Activated CD4-positive, alpha-beta T cell treated with anti-CD3 and anti-CD28 coated beads, Interleukin-2, amount 10 ng/mL, durations not matched to agents 24 days and 14 days (primary cell): ENCODE measurements at regions of chr22 and their contacts with region 1.

Region 1: GRCh38 chr22:23786752-23787599 is at the start of gene SMARCB1:
- DNase-seq: peak; percentile 96
- H3K4me3 Mint-ChIP-seq: peak within 1 kb of the TSS; percentile 88
- H3K27ac Mint-ChIP-seq: peak within 1 kb of the TSS; percentile 95
- H3K4me1 Mint-ChIP-seq: peaks cover 28% of the 10 kb centered on the region
- H3K27me3 Mint-ChIP-seq: no peaks in the 10 kb centered on the region
- total RNA-seq, gene SMARCB1: 89.9 and 92.2 TPM in 2 replicates

Region 2: DNA sequence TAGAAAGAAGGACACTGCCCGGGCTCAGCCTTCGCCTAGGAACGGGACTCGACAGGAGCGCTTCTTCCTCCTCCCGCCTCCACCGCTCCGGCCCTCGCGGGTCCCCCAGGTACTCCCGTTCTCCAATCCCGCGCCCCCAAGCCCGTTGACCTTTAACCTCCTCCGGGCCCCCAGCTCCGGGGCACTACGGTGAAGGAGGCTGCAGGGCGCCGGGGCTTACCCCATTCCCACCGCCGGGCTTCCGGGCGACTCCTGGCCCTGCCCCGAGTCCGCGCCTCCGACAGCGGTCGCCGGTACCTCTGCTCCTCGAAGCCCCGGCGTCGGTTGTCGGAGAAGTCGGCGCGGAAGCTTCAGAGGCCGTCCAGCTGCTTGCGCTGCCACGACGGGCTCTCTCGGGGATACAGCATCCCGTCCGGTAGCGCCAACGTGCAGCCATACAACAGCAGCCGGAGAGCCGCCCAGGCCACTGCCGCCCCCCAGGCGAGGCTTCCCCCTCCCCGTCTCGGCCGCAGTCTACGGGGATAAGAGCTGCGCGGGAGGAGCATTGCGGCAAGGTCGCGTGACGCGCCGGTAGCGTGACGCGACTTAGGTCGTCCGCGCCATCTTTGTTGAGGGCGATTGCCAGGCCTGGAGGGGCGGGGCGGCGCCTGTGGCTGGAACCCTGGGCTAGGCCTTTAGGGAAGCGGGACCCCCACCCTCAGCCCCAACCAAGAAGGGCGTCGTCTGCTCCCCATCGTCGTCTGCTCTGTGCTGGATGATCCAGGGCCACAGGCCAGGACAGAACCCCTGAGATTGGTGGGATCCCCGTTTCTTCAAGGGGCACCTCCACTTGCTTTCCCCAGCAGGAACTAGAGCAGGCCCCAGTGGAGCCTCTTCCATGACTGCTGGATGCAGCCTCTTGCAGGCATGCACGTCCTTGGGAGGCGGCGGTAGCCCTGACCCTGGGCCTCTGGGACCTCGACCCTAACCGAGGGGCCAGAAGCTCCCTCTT is 69.9 kb before region 1 on chr22:
- intact Hi-C with region 1: loop called (anchors 2 kb)
- DNase-seq: peak; percentile 96
- H3K4me3 Mint-ChIP-seq: peak overlapping the region; percentile 80
- H3K27ac Mint-ChIP-seq: peak overlapping the region; percentile 87
- H3K4me1 Mint-ChIP-seq: peaks cover 14% of the 10 kb centered on the region
- H3K27me3 Mint-ChIP-seq: no peaks in the 10 kb centered on the region

Region 3: GRCh38 chr22:23767673-23768548 is 19.1 kb before region 1 on chr22 and contains the start of gene CHCHD10:
- intact Hi-C with region 1: loop called (anchors 1 kb)
- DNase-seq: peak; percentile 95
- H3K4me3 Mint-ChIP-seq: peak within 1 kb of the TSS; percentile 87
- H3K27ac Mint-ChIP-seq: peak within 1 kb of the TSS; percentile 79
- H3K4me1 Mint-ChIP-seq: peaks cover 34% of the 10 kb centered on the region
- H3K27me3 Mint-ChIP-seq: peaks cover 2% of the 10 kb centered on the region
- total RNA-seq, gene CHCHD10: 122 and 126 TPM in 2 replicates

Region 4: GRCh38 chr22:23838681-23839468 is 51.9 kb after region 1 on chr22 and contains the start of gene DERL3:
- intact Hi-C with region 1: loop called (anchors 1 kb)
- DNase-seq: peak; percentile 99
- H3K4me3 Mint-ChIP-seq: peak within 1 kb of the TSS; percentile 97
- H3K27ac Mint-ChIP-seq: peak within 1 kb of the TSS; percentile 96
- H3K4me1 Mint-ChIP-seq: peaks cover 25% of the 10 kb centered on the region
- H3K27me3 Mint-ChIP-seq: peaks cover 11% of the 10 kb centered on the region
- total RNA-seq, gene DERL3: 13.4 and 14.8 TPM in 2 replicates

Region 5: DNA sequence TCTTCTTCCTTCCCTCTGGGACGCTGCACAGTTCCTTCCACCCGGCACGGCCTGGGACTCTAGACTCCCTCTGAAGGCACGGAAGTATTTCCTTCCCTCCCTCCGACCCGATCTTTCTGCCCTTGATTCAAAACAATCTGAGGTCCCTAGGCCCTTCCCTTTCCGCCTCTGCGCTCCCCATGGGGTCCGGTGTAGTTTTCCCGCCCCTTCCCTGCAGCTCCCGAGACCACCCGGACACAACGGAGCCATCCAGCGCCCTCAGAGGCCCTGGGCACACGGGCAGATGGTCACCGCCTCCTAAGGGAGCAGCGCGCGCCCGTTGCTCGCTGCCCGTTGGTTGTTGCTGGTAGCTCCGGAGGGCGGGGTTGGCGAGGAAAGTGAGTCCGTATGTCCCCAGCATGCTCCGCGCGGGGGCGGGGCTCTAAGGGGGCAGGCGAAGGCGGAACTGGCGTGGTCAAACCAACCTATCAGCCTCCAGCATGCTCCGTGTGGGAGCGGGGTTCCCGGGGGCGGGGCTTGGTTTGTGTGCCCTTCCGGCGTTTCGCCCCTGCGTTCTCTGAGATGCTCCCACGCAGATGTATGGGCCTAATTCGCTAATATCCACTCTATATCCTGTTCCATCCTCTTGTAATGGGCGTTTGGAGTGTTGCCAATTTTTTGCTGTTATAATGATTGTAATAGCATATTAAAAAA is 126.8 kb after region 1 on chr22:
- intact Hi-C with region 1: loop called (anchors 1 kb)
- DNase-seq: peak; percentile 100
- H3K4me3 Mint-ChIP-seq: peak overlapping the region; percentile 95
- H3K27ac Mint-ChIP-seq: peak overlapping the region; percentile 99
- H3K4me1 Mint-ChIP-seq: peaks cover 26% of the 10 kb centered on the region
- H3K27me3 Mint-ChIP-seq: no peaks in the 10 kb centered on the region